ENCODE measurements at regions of chr1 and their contacts with region 1.

Region 1: GRCh38 chr1:91929250-91929649 is 20.0 kb upstream of the BRDT start:
- DNase-seq: no peak
- H3K4me3 Mint-ChIP-seq: no peak overlapping the region
- H3K27ac Mint-ChIP-seq: no peak overlapping the region
- H3K4me1 Mint-ChIP-seq: peaks cover 3% of the 10 kb centered on the region
- H3K27me3 Mint-ChIP-seq: no peaks in the 10 kb centered on the region

Region 2: GRCh38 chr1:91165033-91165654 is 764.1 kb before region 1 on chr1:
- intact Hi-C with region 1: loop called (anchors 5 kb)
- DNase-seq: peak; percentile 50
- H3K4me3 Mint-ChIP-seq: no peak overlapping the region
- H3K27ac Mint-ChIP-seq: no peak overlapping the region
- H3K4me1 Mint-ChIP-seq: no peaks in the 10 kb centered on the region
- H3K27me3 Mint-ChIP-seq: no peaks in the 10 kb centered on the region

Region 3: GRCh38 chr1:91404151-91405012 is 524.9 kb before region 1 on chr1 and contains the start of gene HFM1:
- intact Hi-C with region 1: loop called (anchors 5 kb)
- DNase-seq: peak; percentile 24
- H3K4me3 Mint-ChIP-seq: peak within 1 kb of the TSS; percentile 57
- H3K27ac Mint-ChIP-seq: no peak within 1 kb of the TSS
- H3K4me1 Mint-ChIP-seq: peaks cover 2% of the 10 kb centered on the region
- H3K27me3 Mint-ChIP-seq: peaks cover 62% of the 10 kb centered on the region
- total RNA-seq, gene HFM1: not detected in 2 replicates

Region 4: DNA sequence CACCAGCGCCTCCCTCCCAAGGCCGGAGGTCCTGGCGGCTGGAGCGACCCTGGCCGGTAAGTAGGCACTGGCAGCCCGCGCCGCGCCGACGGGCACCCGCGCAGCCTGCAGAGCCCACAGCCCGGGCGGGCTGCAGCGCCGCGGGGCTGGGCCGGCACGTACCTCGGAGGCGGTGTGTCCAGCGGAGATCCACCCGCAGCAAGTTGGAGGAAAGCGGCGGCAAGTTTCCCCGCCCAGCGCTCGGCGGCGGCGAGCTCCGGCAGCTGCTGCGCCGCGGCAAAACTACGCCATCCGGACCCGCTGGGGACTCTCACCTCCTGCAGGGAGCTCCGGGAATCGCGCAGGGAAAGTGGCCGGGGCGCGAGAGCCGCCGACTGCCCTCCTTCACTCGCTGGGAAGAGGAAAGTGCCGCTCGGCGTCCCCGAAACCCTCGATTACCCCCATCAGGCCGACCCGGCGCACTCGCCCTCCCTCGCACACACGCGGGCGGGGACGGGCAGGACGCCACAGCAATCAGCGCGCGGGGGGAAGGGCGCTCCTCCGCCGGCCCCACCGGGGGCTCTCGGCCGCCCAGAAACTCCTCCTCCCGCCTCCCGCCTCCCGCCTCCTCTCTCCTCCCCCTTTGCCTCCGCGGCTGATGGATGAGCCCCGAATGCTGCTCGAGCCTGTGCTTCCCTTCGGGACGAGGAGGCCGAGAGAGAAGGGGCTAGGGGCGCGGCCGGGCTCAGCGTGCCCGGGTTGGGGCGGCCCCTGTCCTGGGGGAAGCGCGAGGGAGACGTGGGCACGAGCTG is 43.3 kb before region 1 on chr1 and contains the start of gene TGFBR3:
- intact Hi-C with region 1: loop called (anchors 5 kb)
- DNase-seq: peak; percentile 61
- H3K4me3 Mint-ChIP-seq: peak within 1 kb of the TSS; percentile 98
- H3K27ac Mint-ChIP-seq: peak within 1 kb of the TSS; percentile 84
- H3K4me1 Mint-ChIP-seq: peaks cover 45% of the 10 kb centered on the region
- H3K27me3 Mint-ChIP-seq: peaks cover 11% of the 10 kb centered on the region
- total RNA-seq, gene TGFBR3: 28.0 and 29.9 TPM in 2 replicates